ENCODE measurements at regions of chrX and their contacts with region 1.

Region 1: GRCh38 chrX:123277821-123278423 is 93.8 kb downstream of the GRIA3 start:
- DNase-seq: no peak
- ATAC-seq: peak; percentile 59
- H3K4me3 ChIP-seq: no peak overlapping the region
- H3K27ac ChIP-seq: no peak overlapping the region
- H3K4me1 ChIP-seq: no peaks in the 10 kb centered on the region
- H3K27me3 ChIP-seq: no peaks in the 10 kb centered on the region
- CTCF ChIP-seq: peak; percentile 11 to 21 (median 11); a peak in 3 of 6 replicates
- EP300 ChIP-seq: no peak
- POLR2A ChIP-seq: no peak
- RAD21 ChIP-seq: peak; percentile 28; the same call in 1 of the 2 replicates

Region 2: GRCh38 chrX:123256378-123256777 is 21.5 kb before region 1 on chrX:
- CTCF ChIA-PET with region 1: interaction called, 10 read pairs
- POLR2A ChIA-PET with region 1: no interaction called
- RAD21 ChIA-PET with region 1: interaction called, 4 read pairs
- SMC1A ChIA-PET with region 1: interaction called, 10 read pairs
- in situ Hi-C with region 1: no loop called
- intact Hi-C with region 1: no loop called
- DNase-seq: peak; percentile 24
- ATAC-seq: peak; percentile 90
- H3K4me3 ChIP-seq: no peak overlapping the region
- H3K27ac ChIP-seq: no peak overlapping the region
- H3K4me1 ChIP-seq: no peaks in the 10 kb centered on the region
- H3K27me3 ChIP-seq: no peaks in the 10 kb centered on the region
- CTCF ChIP-seq: no peak
- EP300 ChIP-seq: no peak
- POLR2A ChIP-seq: no peak
- RAD21 ChIP-seq: no peak

Region 3: GRCh38 chrX:123267220-123267619 is 10.7 kb before region 1 on chrX:
- CTCF ChIA-PET with region 1: interaction called, 10 read pairs
- POLR2A ChIA-PET with region 1: interaction called, 3 read pairs
- RAD21 ChIA-PET with region 1: interaction called, 3 read pairs
- SMC1A ChIA-PET with region 1: interaction called, 10 read pairs
- in situ Hi-C with region 1: no loop called
- intact Hi-C with region 1: no loop called
- DNase-seq: no peak
- ATAC-seq: no peak
- H3K4me3 ChIP-seq: no peak overlapping the region
- H3K27ac ChIP-seq: no peak overlapping the region
- H3K4me1 ChIP-seq: no peaks in the 10 kb centered on the region
- H3K27me3 ChIP-seq: no peaks in the 10 kb centered on the region
- CTCF ChIP-seq: no peak
- EP300 ChIP-seq: no peak
- POLR2A ChIP-seq: no peak
- RAD21 ChIP-seq: no peak

Measured in GM12878 (cell line).